T-cell (primary cell): ENCODE measurements at regions of chr2 and their contacts with region 1.

Region 1: GRCh38 chr2:148108377-148108776 is 87.5 kb downstream of the MBD5 start:
- DNase-seq: no peak
- ATAC-seq: no peak
- H3K4me3 ChIP-seq: no peak overlapping the region
- H3K4me3 Mint-ChIP-seq: no peak overlapping the region
- H3K27ac ChIP-seq: no peak overlapping the region
- H3K27ac Mint-ChIP-seq: no peak overlapping the region
- H3K4me1 ChIP-seq: no peaks in the 10 kb centered on the region
- H3K4me1 Mint-ChIP-seq: peaks cover 15 to 22% (median 15%) of the 10 kb centered on the region in 3 donors
- H3K27me3 ChIP-seq: no peaks in the 10 kb centered on the region
- H3K27me3 Mint-ChIP-seq: no peaks in the 10 kb centered on the region

Region 2: GRCh38 chr2:148167855-148168254 is 59.5 kb after region 1 on chr2:
- CTCF ChIA-PET with region 1: no interaction called
- POLR2A ChIA-PET with region 1: no interaction called
- DNase-seq: no peak
- ATAC-seq: no peak
- H3K4me3 ChIP-seq: no peak overlapping the region
- H3K4me3 Mint-ChIP-seq: no peak overlapping the region
- H3K27ac ChIP-seq: no peak overlapping the region
- H3K27ac Mint-ChIP-seq: no peak overlapping the region
- H3K4me1 ChIP-seq: no peaks in the 10 kb centered on the region
- H3K4me1 Mint-ChIP-seq: peaks cover 0 to 6% (median 2%) of the 10 kb centered on the region in 3 donors
- H3K27me3 ChIP-seq: no peaks in the 10 kb centered on the region
- H3K27me3 Mint-ChIP-seq: no peaks in the 10 kb centered on the region

Region 3: DNA sequence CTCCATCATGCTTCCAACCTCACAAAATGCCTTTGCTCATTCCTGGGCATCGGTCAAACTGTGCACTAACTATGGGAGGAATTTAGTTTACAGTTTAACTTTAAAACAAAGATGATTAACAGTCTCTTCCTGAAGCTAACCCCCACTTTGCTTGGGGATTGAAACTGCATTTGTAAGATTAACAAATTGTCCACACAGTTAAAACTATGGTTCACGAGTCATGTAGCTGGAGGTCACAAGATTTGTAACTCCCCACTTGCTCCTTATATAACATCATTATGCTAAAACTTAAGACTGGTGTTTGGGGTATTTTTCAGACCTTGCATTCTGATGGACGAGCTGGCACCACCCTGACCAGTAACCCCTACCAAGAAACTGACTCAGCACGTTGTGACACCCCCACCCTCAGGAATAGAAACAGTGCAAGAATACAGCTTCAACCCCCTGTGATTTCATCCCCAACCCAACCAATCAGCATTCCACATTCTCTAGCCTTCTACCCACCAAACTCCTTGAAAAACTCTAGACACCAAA is 164.8 kb after region 1 on chr2:
- CTCF ChIA-PET with region 1: no interaction called
- POLR2A ChIA-PET with region 1: interaction called in 1 of 2 experiments, 10 read pairs
- DNase-seq: no peak
- ATAC-seq: no peak
- H3K4me3 ChIP-seq: no peak overlapping the region
- H3K4me3 Mint-ChIP-seq: no peak overlapping the region
- H3K27ac ChIP-seq: no peak overlapping the region
- H3K27ac Mint-ChIP-seq: no peak overlapping the region
- H3K4me1 ChIP-seq: no peaks in the 10 kb centered on the region
- H3K4me1 Mint-ChIP-seq: peaks cover 0 to 10% (median 0%) of the 10 kb centered on the region in 3 donors
- H3K27me3 ChIP-seq: no peaks in the 10 kb centered on the region
- H3K27me3 Mint-ChIP-seq: no peaks in the 10 kb centered on the region